Posterior cingulate gyrus (tissue), 11 donors: ENCODE measurements at regions of chr7 and their contacts with region 1.

Region 1: DNA sequence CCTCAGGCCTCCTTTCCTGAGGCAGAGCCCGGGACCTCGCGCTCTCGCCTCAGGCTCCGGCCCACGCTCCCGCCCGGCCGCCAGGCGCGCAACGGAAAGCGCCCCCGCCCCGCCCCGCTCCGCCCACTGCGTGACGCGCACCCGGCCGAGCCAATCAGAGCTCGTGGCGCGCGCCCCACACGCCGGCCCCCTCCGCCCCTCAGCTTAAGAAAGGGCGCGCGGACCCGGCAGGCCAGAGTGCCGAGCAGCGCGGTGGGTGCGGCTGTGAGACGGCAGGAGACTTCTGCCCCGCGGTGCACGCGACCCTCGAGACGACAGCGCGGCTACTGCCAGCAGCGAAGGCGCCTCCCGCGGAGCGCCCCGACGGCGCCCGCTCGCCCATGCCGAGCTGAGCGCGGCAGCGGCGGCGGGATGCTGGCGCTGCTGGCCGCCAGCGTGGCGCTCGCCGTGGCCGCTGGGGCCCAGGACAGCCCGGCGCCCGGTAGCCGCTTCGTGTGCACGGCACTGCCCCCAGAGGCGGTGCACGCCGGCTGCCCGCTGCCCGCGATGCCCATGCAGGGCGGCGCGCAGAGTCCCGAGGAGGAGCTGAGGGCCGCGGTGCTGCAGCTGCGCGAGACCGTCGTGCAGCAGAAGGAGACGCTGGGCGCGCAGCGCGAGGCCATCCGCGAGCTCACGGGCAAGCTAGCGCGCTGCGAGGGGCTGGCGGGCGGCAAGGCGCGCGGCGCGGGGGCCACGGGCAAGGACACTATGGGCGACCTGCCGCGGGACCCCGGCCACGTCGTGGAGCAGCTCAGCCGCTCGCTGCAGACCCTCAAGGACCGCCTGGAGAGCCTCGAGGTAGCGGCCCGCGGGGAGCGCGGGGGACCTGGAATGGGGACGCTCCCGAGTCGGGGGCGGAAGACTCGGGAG is at the start of gene NPTX2:
- DNase-seq: peak; percentile 52 to 96 (median 78)

Region 2: GRCh38 chr7:98569691-98570337 is 47.5 kb before region 1 on chr7:
- intact Hi-C with region 1: loop called (anchors 10 kb)
- DNase-seq: peak; percentile 43 to 94 (median 74)

Region 3: GRCh38 chr7:98650424-98650823 is 33.1 kb after region 1 on chr7:
- intact Hi-C with region 1: loop called (anchors 5 kb)
- DNase-seq: no peak